ENCODE measurements at regions of chr1 and their contacts with region 1.

Region 1: GRCh38 chr1:206725109-206725963 is 40.6 kb downstream of the MAPKAPK2 start:
- DNase-seq: peak; percentile 85
- ATAC-seq: peak; percentile 72
- H3K4me3 Mint-ChIP-seq: no peak overlapping the region
- H3K27ac Mint-ChIP-seq: peak overlapping the region; percentile 29
- H3K4me1 Mint-ChIP-seq: peaks cover 49% of the 10 kb centered on the region
- H3K27me3 Mint-ChIP-seq: no peaks in the 10 kb centered on the region

Region 2: DNA sequence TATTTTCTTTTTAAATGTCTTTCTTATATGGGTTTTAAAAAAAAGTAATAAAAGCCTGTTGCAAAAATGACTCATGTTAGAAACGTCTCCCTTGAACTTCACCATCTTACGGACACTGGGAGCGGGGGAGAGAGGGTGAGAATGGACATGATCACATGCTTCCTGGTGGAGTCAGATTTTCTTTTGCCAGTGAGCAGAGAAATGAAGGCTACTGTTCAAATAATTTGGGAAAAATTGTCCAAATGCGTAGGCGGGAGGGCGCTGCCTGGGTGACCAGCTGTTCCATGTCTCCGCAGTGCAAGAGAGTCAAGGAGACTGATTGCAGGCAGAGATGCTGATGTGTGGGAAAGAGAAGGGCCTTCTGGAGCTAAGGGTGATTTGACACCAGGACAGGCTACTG is 136.1 kb before region 1 on chr1:
- CTCF ChIA-PET with region 1: no interaction called
- POLR2A ChIA-PET with region 1: no interaction called
- intact Hi-C with region 1: no loop called
- DNase-seq: no peak
- ATAC-seq: no peak
- H3K4me3 Mint-ChIP-seq: peak overlapping the region; percentile 34
- H3K27ac Mint-ChIP-seq: peak overlapping the region; percentile 98
- H3K4me1 Mint-ChIP-seq: peaks cover 74% of the 10 kb centered on the region
- H3K27me3 Mint-ChIP-seq: no peaks in the 10 kb centered on the region

Region 3: DNA sequence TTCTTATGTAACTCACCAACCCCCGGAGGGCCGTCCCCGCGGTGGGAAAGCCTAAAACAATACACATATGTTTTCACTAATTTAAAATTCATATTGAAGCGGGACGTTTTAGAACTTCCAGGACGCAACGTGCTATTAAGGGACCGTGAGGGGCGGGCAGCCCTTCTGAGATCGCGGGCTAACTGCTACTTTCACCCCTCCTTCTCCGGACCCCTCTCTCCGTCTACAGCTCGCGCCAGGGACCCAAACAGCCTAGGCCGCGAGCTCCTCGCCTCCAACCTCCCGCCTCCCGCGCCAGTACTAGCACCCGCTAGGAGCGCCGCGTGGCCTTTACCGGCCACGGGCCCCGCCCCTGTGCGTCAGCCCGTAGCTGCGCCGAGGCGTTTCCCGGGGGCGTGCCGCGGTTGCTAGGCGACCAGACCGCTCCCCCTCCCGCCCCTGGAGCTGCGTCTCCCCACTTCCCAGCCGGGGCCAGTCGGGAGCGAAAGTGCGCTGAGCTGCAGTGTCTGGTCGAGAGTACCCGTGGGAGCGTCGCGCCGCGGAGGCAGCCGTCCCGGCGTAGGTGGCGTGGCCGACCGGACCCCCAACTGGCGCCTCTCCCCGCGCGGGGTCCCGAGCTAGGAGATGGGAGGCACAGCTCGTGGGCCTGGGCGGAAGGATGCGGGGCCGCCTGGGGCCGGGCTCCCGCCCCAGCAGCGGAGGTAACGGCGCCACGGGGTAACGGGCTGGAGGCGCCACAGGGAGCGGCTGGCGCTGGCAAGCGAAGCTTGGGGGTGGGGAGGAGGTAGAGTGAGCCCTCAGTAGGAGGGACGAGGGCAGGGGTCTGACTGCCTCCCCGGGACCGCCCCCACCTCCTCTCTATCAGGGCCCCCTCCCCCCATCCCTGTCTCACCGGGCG is 90.0 kb before region 1 on chr1 and contains the start of gene DYRK3:
- CTCF ChIA-PET with region 1: interaction called, 11 read pairs
- POLR2A ChIA-PET with region 1: no interaction called
- intact Hi-C with region 1: no loop called
- DNase-seq: peak; percentile 97
- ATAC-seq: peak; percentile 93
- H3K4me3 Mint-ChIP-seq: peak within 1 kb of the TSS; percentile 76
- H3K27ac Mint-ChIP-seq: peak within 1 kb of the TSS; percentile 87
- H3K4me1 Mint-ChIP-seq: peaks cover 27% of the 10 kb centered on the region
- H3K27me3 Mint-ChIP-seq: peaks cover 7% of the 10 kb centered on the region
- total RNA-seq, gene DYRK3: 8.3 to 8.7 TPM

Region 4: DNA sequence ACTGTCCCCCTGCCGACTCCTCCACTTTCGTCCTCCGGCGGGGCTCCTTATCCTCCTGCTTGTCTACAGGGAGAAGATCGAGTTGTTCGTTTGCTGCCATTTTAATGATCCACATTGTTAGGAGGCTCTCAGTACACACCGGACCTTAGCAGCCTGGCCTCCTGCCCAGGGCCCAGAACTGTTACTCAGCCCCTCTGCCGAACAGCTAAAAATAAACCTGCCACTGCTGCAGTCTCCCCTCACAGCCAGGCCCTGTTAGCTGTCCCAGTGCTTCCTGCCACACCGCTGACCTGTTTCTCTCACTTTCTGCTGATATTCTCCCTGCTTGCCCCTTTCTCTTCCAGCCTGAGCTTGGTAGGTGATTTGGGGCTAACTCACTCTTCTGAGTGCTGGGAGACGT is 32.3 kb before region 1 on chr1:
- CTCF ChIA-PET with region 1: interaction called, 11 read pairs
- POLR2A ChIA-PET with region 1: no interaction called
- intact Hi-C with region 1: loop called in 1 of 2 experiments (anchors 5 kb)
- DNase-seq: no peak
- ATAC-seq: no peak
- H3K4me3 Mint-ChIP-seq: no peak overlapping the region
- H3K27ac Mint-ChIP-seq: peak overlapping the region; percentile 32
- H3K4me1 Mint-ChIP-seq: peaks cover 64% of the 10 kb centered on the region
- H3K27me3 Mint-ChIP-seq: no peaks in the 10 kb centered on the region

Region 5: DNA sequence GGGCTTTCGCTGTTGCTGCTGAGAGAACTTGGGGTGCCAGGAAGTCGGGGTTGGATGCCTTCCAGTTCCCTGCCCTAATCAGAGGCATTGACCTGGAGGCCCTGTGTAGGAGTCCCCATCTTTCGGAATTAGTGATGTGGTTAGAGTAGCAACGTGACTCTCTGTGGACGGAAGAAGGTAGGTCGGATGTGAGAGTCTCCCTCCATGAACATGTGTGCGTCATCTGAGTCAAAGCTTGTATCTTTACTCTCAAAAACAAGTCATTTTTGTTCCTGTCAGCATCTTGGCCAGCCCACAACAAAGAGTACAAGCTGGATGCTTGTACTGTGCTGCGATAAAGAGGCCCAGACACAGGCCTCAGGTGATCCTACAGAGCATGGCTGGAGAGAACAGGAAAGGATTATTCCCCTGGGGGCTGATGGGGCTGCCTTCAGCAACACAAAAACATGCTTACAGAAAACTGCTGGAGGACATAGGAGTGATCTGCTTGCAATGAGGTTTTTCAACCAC is 77.9 kb after region 1 on chr1:
- CTCF ChIA-PET with region 1: interaction called, 68 read pairs
- POLR2A ChIA-PET with region 1: no interaction called
- intact Hi-C with region 1: loop called (anchors 1 kb)
- DNase-seq: peak; percentile 87
- ATAC-seq: peak; percentile 91
- H3K4me3 Mint-ChIP-seq: peak overlapping the region; percentile 0
- H3K27ac Mint-ChIP-seq: peak overlapping the region; percentile 77
- H3K4me1 Mint-ChIP-seq: peaks cover 67% of the 10 kb centered on the region
- H3K27me3 Mint-ChIP-seq: peaks cover 21% of the 10 kb centered on the region

Region 6: GRCh38 chr1:206856674-206857464 is 131.5 kb after region 1 on chr1:
- CTCF ChIA-PET with region 1: interaction called, 11 read pairs
- POLR2A ChIA-PET with region 1: no interaction called
- intact Hi-C with region 1: no loop called
- DNase-seq: peak; percentile 39
- ATAC-seq: peak; percentile 81
- H3K4me3 Mint-ChIP-seq: no peak overlapping the region
- H3K27ac Mint-ChIP-seq: no peak overlapping the region
- H3K4me1 Mint-ChIP-seq: peaks cover 19% of the 10 kb centered on the region
- H3K27me3 Mint-ChIP-seq: peaks cover 9% of the 10 kb centered on the region

Region 7: DNA sequence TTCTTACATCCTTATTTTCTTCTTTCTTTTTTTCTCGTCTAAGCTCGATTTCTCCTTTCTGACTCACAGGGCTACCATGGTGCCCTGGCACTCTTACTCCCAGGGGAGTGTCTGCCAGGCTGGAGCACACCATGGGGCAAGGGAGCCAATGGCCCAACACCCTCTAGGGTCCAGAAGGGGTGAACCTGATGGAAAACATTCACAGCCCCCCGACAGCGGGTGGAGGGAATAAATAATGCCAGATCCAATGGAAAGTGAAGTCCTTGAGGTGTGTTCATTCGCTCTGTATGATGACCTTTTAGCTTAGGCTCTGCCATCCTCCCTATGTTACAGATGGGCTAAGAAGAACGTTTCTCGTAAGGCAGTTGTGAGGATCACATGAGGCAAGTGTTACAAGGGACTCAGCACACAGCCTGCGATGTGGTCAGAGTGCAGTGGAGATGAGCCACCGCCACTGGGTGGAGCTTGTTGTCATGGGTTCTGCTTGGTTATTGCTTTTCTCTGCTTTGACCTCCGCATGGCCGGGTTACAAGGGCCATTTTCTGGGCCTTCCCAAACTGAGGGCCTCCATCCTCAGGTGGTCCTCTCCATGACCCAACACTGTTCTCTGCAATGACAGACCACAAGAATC is 199.9 kb after region 1 on chr1:
- CTCF ChIA-PET with region 1: interaction called, 16 read pairs
- POLR2A ChIA-PET with region 1: no interaction called
- intact Hi-C with region 1: no loop called
- DNase-seq: peak; percentile 83
- ATAC-seq: peak; percentile 58
- H3K4me3 Mint-ChIP-seq: no peak overlapping the region
- H3K27ac Mint-ChIP-seq: no peak overlapping the region
- H3K4me1 Mint-ChIP-seq: peaks cover 28% of the 10 kb centered on the region
- H3K27me3 Mint-ChIP-seq: no peaks in the 10 kb centered on the region

Region 8: GRCh38 chr1:206982216-206982615 is 256.9 kb after region 1 on chr1:
- CTCF ChIA-PET with region 1: interaction called, 21 read pairs
- POLR2A ChIA-PET with region 1: no interaction called
- intact Hi-C with region 1: loop called (anchors 2 to 5 kb)
- DNase-seq: peak; percentile 74
- ATAC-seq: peak; percentile 81
- H3K4me3 Mint-ChIP-seq: no peak overlapping the region
- H3K27ac Mint-ChIP-seq: no peak overlapping the region
- H3K4me1 Mint-ChIP-seq: peaks cover 3% of the 10 kb centered on the region
- H3K27me3 Mint-ChIP-seq: peaks cover 2% of the 10 kb centered on the region